ENCODE measurements at regions of chr2 and their contacts with region 1.

Region 1: DNA sequence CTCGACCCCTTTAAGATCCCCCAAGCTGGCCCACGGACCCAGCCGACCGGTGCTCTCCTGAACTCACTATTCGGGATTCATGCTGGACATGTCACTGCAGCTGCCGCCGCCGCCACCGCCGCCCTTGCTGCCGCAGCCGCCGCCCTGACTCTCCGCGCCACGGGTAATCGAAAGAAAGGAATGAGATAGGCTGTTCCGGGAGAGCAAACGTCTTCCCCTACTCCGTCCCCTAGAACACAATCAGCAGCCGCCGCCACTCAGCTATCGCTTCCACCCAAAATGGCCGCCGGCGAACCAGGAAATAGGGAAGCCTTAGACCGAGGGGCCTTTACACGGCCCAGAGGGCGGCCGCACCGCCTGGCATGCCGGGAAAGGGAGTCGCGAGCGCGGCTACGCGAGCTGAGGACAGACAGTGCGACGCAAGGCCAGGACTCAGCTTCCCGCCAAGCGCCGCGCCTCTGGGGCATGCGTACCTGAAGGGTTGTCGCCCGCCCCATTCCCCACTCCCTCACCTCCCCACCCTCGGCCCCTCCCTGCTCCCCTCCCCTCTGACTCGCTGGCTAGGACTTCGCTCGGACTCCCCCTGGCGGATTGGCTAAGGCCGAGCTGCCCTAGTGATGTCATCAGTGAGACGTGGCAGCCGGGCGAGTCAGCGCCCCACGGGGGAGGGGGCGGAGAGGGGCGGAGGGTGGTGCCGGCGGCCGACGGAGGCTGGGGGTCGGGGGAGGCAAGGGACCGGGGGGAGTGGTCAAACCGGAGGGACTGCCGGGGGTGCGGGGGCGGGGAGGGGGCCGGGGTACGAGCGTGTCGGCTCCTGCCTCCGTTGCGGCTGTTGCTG is at the start of gene RAB1A:
- DNase-seq: peak; percentile 100
- ATAC-seq: peak; percentile 97 to 98 (median 98)
- H3K4me3 ChIP-seq: peak within 1 kb of the TSS; percentile 76 to 94 (median 80)
- H3K27ac ChIP-seq: peak within 1 kb of the TSS; percentile 87 to 98 (median 96)
- H3K4me1 ChIP-seq: peaks cover 11 to 58% (median 40%) of the 10 kb centered on the region in 12 donors
- H3K27me3 ChIP-seq: no peaks in the 10 kb centered on the region
- CTCF ChIP-seq: peak; percentile 25 to 70 (median 52)
- POLR2A ChIP-seq: peak; percentile 51 to 62
- total RNA-seq, gene RAB1A: 49.0 to 137 (median 118) TPM

Region 2: DNA sequence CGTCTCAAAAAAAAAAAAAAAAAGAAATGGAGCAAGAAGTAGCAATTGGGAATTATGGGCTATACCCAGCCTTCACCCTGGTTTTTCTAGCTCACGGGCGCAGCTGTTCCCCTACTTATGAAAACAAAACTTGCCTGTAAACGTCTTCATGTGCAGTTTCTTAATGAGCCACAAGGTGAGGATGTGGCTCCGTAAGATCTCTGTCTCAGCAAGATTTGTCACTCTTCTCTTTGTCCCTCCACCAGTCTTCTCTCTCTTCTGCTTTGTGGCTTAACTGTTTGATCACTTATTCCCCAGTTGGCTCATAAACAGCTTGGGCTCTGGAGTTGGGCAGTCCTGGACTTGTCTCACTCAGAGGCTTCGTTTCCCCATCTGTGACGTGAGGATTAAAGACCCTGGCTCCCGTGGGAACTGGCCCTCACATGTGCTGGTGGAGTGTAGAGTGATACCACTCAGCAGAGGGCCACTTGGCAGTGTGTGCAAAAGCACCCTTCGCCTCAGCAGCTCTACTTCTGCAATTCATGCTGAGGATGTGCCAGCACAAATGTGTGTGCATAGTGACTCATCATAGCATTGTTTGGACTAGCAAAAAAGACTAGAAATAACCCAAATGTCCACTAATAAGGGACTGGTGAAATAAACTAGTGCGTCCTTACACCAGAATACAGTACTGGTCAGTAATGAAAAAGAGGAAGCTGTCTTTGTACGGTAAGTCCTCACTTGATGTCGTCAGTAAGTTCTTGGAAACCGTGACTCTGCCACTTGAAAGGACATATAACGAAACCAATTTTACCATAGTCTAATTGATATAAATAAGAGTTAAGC is 65.1 kb before region 1 on chr2:
- intact Hi-C with region 1: loop called in 4 of 10 experiments (anchors 5 kb)
- DNase-seq: peak in 4 of 5 donors; percentile 45 to 79 (median 66)
- ATAC-seq: peak; percentile 78 to 85 (median 82)
- H3K4me3 ChIP-seq: peak overlapping the region in 1 of 12 donors; percentile 12
- H3K27ac ChIP-seq: peak overlapping the region in 11 of 12 donors; percentile 6 to 87 (median 39)
- H3K4me1 ChIP-seq: peaks cover 10 to 99% (median 79%) of the 10 kb centered on the region in 12 donors
- H3K27me3 ChIP-seq: no peaks in the 10 kb centered on the region
- CTCF ChIP-seq: peak; percentile 59 to 79 (median 70)
- POLR2A ChIP-seq: no peak

Region 3: DNA sequence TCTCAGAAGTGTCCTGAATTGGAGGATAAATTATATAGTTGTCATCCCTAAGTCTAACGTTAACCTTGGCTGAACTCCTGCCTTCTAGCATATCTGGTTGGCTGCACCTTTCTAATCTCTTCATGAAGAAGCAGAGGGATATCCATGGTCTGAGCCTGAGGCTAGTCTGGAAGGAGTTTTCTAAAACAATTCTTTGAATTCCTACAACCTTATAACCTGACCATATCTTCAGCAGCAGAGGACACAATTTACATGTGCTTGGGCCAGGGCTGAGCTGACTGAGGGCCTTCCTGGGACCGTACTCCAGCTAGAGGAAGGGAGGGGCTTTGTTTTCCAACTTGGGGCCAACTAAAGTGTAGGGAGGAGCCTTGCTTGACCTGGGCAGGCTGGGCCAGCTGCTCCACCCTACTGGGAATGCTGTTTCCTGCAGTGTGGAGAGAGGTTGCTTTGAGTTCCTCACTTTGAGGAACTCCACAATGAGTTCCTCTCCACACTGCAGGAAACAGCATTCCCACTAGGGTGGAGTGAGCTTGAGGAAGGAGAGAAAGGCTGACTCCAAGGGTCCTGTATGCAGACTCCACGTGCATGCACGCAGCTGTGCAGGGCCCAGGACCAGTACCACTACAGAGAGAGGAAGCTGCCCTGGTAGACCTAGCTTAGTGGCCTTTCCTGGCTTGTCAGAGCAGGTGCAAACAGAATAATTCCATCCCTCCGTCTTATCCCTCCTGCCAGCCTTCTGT is 54.3 kb before region 1 on chr2:
- intact Hi-C with region 1: loop called in 5 of 10 experiments (anchors 5 kb)
- DNase-seq: peak in 4 of 5 donors; percentile 65 to 73 (median 68)
- ATAC-seq: peak; percentile 71 to 92 (median 80)
- H3K4me3 ChIP-seq: no peak overlapping the region
- H3K27ac ChIP-seq: peak overlapping the region; percentile 12 to 74 (median 60)
- H3K4me1 ChIP-seq: peaks cover 8 to 56% (median 32%) of the 10 kb centered on the region in 12 donors
- H3K27me3 ChIP-seq: no peaks in the 10 kb centered on the region
- CTCF ChIP-seq: peak in 1 of 12 donors; percentile 14
- POLR2A ChIP-seq: no peak

Region 4: DNA sequence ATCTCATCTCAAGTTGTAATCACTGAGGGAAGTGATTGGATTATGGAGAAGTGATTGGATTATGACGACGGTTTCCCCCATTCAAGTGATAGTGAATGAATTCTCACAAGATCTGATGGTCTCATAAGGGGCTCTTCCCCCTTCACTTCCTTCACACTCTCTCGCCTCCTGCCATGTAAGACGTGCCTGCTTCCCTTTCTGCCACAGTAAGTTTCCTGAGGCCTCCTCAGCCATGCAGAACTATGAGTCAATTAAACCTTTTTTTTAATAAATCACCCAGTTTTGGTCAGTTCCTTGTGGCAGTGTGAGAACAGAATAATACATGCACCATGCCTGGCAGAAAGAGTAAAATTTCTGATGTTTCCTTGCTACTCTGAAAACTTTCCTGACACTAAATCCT is 37.3 kb before region 1 on chr2:
- intact Hi-C with region 1: loop called in 2 of 10 experiments (anchors 5 kb)
- DNase-seq: no peak
- ATAC-seq: no peak
- H3K4me3 ChIP-seq: no peak overlapping the region
- H3K27ac ChIP-seq: peak overlapping the region in 1 of 12 donors; percentile 28
- H3K4me1 ChIP-seq: peaks cover 0 to 23% (median 6%) of the 10 kb centered on the region in 12 donors
- H3K27me3 ChIP-seq: no peaks in the 10 kb centered on the region
- CTCF ChIP-seq: no peak
- POLR2A ChIP-seq: no peak

Region 5: GRCh38 chr2:65164426-65164891 is 34.4 kb after region 1 on chr2:
- intact Hi-C with region 1: loop called in 2 of 10 experiments (anchors 2 to 5 kb)
- DNase-seq: peak in 2 of 5 donors; percentile 38 to 40
- ATAC-seq: peak; percentile 76 to 93 (median 85)
- H3K4me3 ChIP-seq: no peak overlapping the region
- H3K27ac ChIP-seq: peak overlapping the region in 10 of 12 donors; percentile 26 to 78 (median 60)
- H3K4me1 ChIP-seq: peaks cover 0 to 41% (median 16%) of the 10 kb centered on the region in 12 donors
- H3K27me3 ChIP-seq: no peaks in the 10 kb centered on the region
- CTCF ChIP-seq: no peak
- POLR2A ChIP-seq: no peak

Region 6: DNA sequence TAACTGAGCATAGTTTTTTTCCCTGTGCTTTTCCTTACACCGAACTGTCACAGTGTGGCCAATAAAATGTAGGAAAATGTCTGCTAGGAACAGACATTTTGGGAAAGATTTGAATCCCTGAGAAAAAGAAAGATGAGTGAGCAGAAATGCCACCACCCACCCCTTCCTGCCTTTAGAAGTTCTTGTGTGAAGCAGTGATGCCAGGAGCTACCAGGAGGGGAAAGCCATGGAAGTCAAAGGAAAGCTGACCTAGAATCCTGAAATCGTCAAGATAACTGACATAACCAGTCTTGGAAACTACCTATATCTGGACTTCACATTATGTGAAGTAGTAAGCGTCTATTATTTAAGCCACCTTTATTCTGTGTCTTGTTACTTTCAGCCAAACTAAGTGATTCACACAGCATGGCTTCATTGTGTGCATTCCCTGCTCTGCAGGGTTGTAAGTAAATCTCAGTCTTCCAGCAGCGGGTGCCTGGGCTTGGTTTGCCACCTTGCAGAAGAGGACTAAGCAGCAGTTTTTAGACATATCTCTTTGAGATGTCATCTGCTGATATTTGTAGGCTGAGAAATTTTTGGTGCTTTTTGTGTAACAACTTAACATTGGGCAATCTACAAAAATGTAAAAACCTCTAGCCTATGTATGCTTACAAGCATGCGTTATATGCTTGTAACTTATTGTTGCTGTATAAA is 313.6 kb after region 1 on chr2:
- intact Hi-C with region 1: no loop called
- DNase-seq: no peak
- ATAC-seq: no peak
- H3K4me3 ChIP-seq: no peak overlapping the region
- H3K27ac ChIP-seq: no peak overlapping the region
- H3K4me1 ChIP-seq: no peaks in the 10 kb centered on the region
- H3K27me3 ChIP-seq: no peaks in the 10 kb centered on the region
- CTCF ChIP-seq: no peak
- POLR2A ChIP-seq: no peak

Measured in heart left ventricle (tissue), 16 donors.